ENCODE measurements at regions of chr7 and their contacts with region 1.

Region 1: DNA sequence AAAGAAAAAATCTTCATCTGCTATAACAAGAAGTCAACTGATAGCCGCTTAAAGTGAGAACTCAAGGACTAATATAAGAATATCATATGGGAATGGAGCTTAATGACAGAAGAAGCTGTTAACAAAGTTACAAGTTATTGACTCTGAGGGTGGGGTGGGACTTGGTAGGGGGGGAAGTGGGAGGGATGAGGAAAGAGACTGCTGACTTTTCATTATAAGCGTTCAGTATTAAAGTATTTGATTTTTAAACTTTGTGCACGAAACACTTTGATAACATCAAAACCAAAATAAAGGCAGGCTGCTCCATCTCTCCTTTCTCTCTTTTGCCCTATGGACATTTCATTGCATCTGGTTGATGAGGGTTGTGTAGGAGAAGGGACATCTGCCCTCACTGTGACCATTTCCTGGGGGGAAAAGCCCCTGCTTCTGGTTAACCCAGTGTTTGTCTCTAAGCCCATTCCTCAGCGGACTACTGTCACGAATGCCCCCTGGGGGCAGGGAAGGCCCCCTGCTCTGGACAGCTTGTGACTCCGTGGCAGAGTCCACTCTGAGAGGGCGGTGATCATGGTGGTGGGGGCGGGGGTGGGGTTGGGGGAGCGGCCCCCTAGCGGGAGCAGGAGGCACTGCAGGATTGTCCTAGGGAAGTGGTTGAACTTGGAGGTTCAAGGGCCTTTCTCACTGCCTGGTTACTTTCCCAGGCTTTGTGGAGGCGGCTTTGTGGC is 17.4 kb downstream of the SLC13A4 start:
- DNase-seq: peak; percentile 83
- H3K4me3 ChIP-seq: no peak overlapping the region
- H3K27ac ChIP-seq: peak overlapping the region in 1 of 2 experiments; percentile 93; a peak in 1 of 4 replicates
- H3K4me1 ChIP-seq: peaks cover 25 to 41% of the 10 kb centered on the region in 2 experiments
- H3K27me3 ChIP-seq: no peaks in the 10 kb centered on the region
- CTCF ChIP-seq: peak; percentile 64
- EP300 ChIP-seq: no peak
- RAD21 ChIP-seq: no peak

Region 2: GRCh38 chr7:135662373-135663114 is 48.0 kb before region 1 on chr7 and contains the start of gene STMP1:
- CTCF ChIA-PET with region 1: interaction called, 32 read pairs
- POLR2A ChIA-PET with region 1: interaction called, 5 read pairs
- DNase-seq: peak; percentile 100
- H3K4me3 ChIP-seq: peak within 1 kb of the TSS; percentile 73 to 96
- H3K27ac ChIP-seq: peak within 1 kb of the TSS; percentile 92 to 97
- H3K4me1 ChIP-seq: peaks cover 10 to 11% of the 10 kb centered on the region in 2 experiments
- H3K27me3 ChIP-seq: no peaks in the 10 kb centered on the region
- CTCF ChIP-seq: no peak
- EP300 ChIP-seq: peak; percentile 20 to 40; a peak in 2 of 4 replicates
- RAD21 ChIP-seq: peak; percentile 62
- polyA plus RNA-seq, gene STMP1: 26.0 and 30.0 TPM in 2 replicates

Region 3: GRCh38 chr7:135690566-135690965 is 20.0 kb before region 1 on chr7:
- CTCF ChIA-PET with region 1: interaction called, 73 read pairs
- POLR2A ChIA-PET with region 1: no interaction called
- DNase-seq: no peak
- H3K4me3 ChIP-seq: no peak overlapping the region
- H3K27ac ChIP-seq: peak overlapping the region in 1 of 2 experiments; percentile 54; a peak in 2 of 4 replicates
- H3K4me1 ChIP-seq: peaks cover under 1 to 21% of the 10 kb centered on the region in 2 experiments; a peak in 2 of 4 replicates
- H3K27me3 ChIP-seq: no peaks in the 10 kb centered on the region
- CTCF ChIP-seq: no peak
- EP300 ChIP-seq: no peak
- RAD21 ChIP-seq: no peak

Region 4: GRCh38 chr7:135697276-135698049 is 13.1 kb before region 1 on chr7:
- CTCF ChIA-PET with region 1: interaction called, 73 read pairs
- POLR2A ChIA-PET with region 1: interaction called, 4 read pairs
- DNase-seq: no peak
- H3K4me3 ChIP-seq: no peak overlapping the region
- H3K27ac ChIP-seq: no peak overlapping the region
- H3K4me1 ChIP-seq: no peaks in the 10 kb centered on the region; a peak in 1 of 4 replicates
- H3K27me3 ChIP-seq: no peaks in the 10 kb centered on the region
- CTCF ChIP-seq: no peak
- EP300 ChIP-seq: no peak
- RAD21 ChIP-seq: no peak

Region 5: DNA sequence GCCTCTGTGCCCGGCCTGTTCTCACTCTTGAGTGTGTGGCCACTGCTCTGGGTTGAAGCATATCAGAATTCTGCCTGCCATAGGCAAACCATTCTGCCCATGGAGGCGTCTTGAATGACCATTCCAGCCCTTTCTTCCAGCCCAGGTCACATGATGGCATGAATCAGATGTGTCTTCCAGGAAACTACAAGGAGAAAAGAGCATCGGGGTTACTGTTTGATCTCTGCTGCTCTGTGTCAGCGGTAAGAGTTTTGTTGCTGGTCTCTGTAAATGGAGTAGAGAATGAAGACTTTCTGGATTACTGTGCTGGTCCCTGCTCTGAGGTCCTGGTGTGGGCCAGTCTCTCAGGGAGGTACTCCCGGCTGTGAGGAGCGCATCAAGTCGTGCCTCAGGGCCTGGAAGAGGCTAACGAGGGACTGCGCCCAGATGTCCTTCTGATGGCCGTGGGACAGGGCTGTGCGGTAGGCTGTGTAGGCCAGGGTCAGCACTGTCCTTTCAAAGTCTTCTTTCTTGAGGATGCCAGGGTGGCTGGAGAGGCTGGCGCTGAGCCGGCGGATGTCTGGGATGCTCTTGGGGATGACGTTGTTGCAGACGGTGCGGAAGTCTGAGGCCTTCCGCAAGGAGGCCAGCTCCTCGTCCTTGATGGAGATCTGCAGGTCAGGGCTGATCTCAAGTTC is 23.2 kb after region 1 on chr7:
- CTCF ChIA-PET with region 1: interaction called, 25 read pairs
- POLR2A ChIA-PET with region 1: no interaction called
- DNase-seq: no peak
- H3K4me3 ChIP-seq: no peak overlapping the region
- H3K27ac ChIP-seq: no peak overlapping the region
- H3K4me1 ChIP-seq: peaks cover 0 to 9% of the 10 kb centered on the region in 2 experiments; a peak in 2 of 4 replicates
- H3K27me3 ChIP-seq: no peaks in the 10 kb centered on the region
- CTCF ChIP-seq: no peak
- EP300 ChIP-seq: no peak
- RAD21 ChIP-seq: no peak

Region 6: DNA sequence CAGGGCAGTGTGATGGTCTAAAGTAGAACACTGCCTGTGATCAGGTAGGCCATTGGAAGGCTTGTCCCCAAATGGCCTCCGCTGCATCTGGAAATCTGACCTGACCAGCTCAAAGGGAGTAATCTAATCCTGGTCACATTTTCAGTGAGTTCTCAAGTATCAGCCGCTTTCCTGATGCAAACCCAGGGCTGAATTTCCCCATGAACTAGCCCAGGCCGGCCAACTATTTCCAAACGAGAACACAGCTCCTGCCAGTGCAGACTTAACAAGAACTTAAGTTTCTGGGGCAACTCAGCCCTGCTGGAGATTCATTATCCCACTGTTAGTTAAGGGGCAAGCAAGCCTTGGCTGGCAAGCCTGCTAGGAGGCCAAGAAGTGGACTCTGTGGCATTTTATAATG is 97.6 kb after region 1 on chr7:
- CTCF ChIA-PET with region 1: no interaction called
- POLR2A ChIA-PET with region 1: no interaction called
- DNase-seq: no peak
- H3K4me3 ChIP-seq: no peak overlapping the region
- H3K27ac ChIP-seq: no peak overlapping the region
- H3K4me1 ChIP-seq: no peaks in the 10 kb centered on the region; a peak in 1 of 4 replicates
- H3K27me3 ChIP-seq: no peaks in the 10 kb centered on the region; the same call in 1 of the 2 replicates
- CTCF ChIP-seq: no peak
- EP300 ChIP-seq: no peak
- RAD21 ChIP-seq: no peak

Measured in SK-N-SH (cell line).